ENCODE measurements at regions of chr1 and their contacts with region 1.

Region 1: DNA sequence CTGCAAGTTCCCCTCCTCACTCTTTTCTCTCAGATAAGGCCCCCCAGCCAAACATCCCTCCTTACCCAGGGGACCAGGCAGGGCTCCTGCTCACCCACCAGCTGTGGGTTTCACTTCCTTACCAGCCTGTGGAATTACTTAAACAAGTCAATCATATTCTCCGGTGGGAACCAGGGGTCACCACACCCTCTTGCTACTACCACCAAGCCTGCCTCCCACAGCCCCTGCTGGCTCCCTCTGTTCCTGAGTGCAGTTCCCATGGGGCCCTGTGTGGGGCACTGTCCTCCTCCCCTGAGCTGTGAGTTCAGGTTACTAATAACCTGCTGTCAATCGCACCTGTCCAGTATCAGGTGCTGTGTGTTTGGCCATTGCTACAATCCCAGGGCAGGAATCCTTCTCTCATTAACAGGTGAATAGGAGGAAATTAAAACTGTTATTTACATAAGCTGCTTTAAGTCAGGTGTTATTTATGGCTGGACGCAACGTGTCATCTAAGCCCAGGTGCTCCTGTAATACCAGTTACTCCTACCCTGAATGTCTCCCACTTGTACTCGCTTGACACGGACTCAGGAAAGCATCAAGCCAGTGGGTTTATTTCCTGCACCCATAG is 53.1 kb upstream of the LBR start:
- DNase-seq: peak; percentile 73 to 86 (median 82)
- ATAC-seq: peak; percentile 94
- H3K4me3 ChIP-seq: no peak overlapping the region
- H3K27ac ChIP-seq: peak overlapping the region in 3 of 4 donors; percentile 15 to 41 (median 21)
- H3K4me1 ChIP-seq: peaks cover 9% of the 10 kb centered on the region
- H3K27me3 ChIP-seq: no peaks in the 10 kb centered on the region
- CTCF ChIP-seq: peak; percentile 74 to 94 (median 81)
- POLR2A ChIP-seq: no peak

Region 2: DNA sequence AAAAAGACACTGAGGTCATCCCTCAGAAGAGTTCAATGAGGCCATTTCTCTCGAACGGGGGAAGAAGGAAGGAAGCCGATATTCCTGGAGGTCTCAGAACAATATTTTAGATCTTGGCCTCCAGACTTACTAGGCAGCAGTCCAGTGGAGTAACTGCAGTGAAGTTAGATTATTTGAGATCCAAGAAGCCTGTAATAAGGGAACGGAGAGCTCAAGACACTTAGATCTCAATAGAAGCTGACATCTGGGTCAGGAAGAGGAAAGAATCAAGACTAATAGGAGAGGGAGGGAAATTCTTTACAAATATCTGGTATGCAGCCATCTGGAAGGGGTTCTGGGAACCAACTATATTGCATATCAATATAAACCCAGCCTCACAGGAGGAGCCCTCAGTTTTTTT is 185.6 kb after region 1 on chr1:
- intact Hi-C with region 1: no loop called
- DNase-seq: no peak
- ATAC-seq: no peak
- H3K4me3 ChIP-seq: no peak overlapping the region
- H3K27ac ChIP-seq: no peak overlapping the region
- H3K4me1 ChIP-seq: no peaks in the 10 kb centered on the region
- H3K27me3 ChIP-seq: no peaks in the 10 kb centered on the region
- CTCF ChIP-seq: no peak
- POLR2A ChIP-seq: no peak

Region 3: DNA sequence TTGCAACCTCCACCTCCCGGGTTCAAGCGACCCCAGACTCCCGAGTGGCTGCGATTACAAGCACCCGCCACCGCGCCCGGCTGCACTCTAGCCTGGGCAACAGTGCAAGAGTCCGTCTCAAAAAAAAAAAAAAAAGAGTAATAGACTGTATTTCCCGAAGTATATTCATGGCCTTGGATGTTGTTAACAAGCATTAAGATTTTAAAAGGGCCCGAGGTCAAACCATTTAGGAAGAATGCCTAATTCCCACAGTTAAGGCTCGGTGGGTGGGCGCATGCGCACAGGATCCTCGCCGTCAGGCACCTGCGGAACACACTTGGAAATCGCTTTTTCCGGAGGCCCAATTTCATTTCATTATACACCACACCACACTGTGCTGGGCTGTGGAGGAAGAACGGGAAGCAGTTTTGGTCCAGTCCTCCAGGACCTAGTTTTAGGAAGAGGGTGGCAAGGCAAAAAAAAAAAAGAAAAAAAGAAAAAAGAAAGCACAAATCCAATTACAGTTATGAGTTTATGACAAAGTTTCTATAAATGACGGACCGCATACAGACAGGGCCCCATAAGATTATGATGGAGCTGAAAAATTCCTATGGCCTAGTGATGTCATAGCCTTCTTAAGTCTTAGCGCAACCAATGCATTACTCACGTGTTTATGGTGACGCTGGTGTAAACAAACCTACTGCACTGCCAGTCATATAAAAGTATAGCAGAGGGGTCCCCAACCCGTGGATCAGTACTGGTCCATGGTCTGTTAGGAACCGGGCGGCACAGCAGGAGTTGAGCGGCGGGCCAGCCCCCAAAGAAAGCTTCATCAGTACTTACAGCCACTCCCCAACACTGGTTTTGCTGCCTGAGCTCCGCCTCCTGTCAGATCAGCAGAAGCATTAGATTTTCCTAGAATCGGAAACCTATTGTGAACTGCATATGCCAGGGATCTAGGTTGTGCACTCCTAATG is 619.8 kb after region 1 on chr1:
- intact Hi-C with region 1: loop called (anchors 5 kb)
- DNase-seq: peak; percentile 49 to 67 (median 58)
- ATAC-seq: peak; percentile 67
- H3K4me3 ChIP-seq: peak overlapping the region; percentile 26 to 32
- H3K27ac ChIP-seq: peak overlapping the region in 2 of 4 donors; percentile 17 to 39
- H3K4me1 ChIP-seq: peaks cover 10% of the 10 kb centered on the region
- H3K27me3 ChIP-seq: no peaks in the 10 kb centered on the region
- CTCF ChIP-seq: peak in 3 of 7 experiments; percentile 5 to 38 (median 16)
- POLR2A ChIP-seq: no peak

Measured in body of pancreas (tissue), 4 donors.